ENCODE measurements at regions of chr7 and their contacts with region 1.

Region 1: GRCh38 chr7:113159746-113160339 is 41.5 kb upstream of the SMIM30 start:
- DNase-seq: peak; percentile 49
- H3K4me3 ChIP-seq: no peak overlapping the region
- H3K27ac ChIP-seq: no peak overlapping the region
- H3K4me1 ChIP-seq: no peaks in the 10 kb centered on the region
- H3K27me3 ChIP-seq: peaks cover 5% of the 10 kb centered on the region
- CTCF ChIP-seq: peak; percentile 73

Region 2: DNA sequence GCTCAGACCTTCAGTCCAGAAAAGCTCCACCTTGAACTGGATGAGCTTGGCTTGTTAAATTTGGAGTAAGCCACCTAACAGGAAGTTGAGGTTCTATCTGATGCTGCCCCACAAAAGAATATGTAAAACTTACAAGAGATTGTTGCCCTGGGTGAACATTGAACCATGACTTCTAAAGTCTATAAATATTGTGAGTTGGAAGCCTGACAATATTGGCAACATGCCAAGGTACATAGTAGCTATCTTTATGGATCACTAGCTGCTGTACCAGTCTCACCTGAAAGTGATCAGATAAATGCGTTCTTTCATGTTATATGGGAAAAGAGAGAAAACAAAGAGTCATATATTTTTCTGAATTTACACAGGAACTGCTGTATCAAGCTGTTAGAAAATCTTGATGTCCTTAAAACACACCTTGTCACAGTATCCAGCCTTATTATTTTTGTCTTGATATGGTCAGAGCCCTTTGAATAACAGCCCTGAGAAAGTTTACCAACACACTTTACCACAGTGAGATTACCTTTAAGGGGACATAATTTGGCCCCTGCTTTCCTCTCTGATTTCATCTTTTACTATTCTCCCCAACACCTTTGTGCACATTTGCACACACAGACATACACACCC is 587.1 kb before region 1 on chr7:
- CTCF ChIA-PET with region 1: no interaction called
- POLR2A ChIA-PET with region 1: no interaction called
- intact Hi-C with region 1: no loop called
- DNase-seq: no peak
- H3K4me3 ChIP-seq: no peak overlapping the region
- H3K27ac ChIP-seq: no peak overlapping the region
- H3K4me1 ChIP-seq: peaks cover 8% of the 10 kb centered on the region
- H3K27me3 ChIP-seq: no peaks in the 10 kb centered on the region
- CTCF ChIP-seq: no peak

Region 3: DNA sequence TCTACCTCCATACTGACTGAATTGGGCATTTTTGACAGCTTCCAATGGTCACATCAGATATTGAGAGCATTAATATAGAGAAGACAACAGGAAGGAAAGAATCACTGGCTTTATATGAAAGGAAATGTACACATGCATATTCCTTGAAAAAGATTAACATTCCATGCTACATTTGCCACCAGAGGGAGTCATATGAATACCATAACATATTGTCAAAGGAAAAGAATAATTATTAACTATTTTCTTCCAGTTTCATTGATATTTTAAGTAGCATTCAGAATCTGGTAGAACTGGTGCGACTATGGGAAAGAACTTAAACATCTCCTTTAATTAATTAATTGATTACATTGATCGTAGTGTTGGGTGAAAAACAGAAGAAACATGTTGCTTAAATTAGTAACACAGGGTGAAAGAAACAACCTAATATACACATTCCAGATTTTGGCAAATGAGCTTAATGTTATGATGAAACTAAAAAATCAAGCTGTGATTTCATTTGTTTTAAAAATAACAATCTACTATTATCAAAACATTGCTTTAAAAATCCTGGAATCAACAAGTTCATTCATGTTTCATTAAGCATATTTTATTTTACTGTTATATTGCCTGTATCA is 144.7 kb before region 1 on chr7:
- CTCF ChIA-PET with region 1: no interaction called
- POLR2A ChIA-PET with region 1: no interaction called
- intact Hi-C with region 1: loop called (anchors 10 kb)
- DNase-seq: peak; percentile 15
- H3K4me3 ChIP-seq: no peak overlapping the region
- H3K27ac ChIP-seq: no peak overlapping the region
- H3K4me1 ChIP-seq: no peaks in the 10 kb centered on the region
- H3K27me3 ChIP-seq: no peaks in the 10 kb centered on the region
- CTCF ChIP-seq: peak; percentile 59

Region 4: GRCh38 chr7:113289140-113289740 is 129.4 kb after region 1 on chr7:
- CTCF ChIA-PET with region 1: interaction called, 3 read pairs
- POLR2A ChIA-PET with region 1: no interaction called
- intact Hi-C with region 1: loop called (anchors 2 kb)
- DNase-seq: peak; percentile 23
- H3K4me3 ChIP-seq: no peak overlapping the region
- H3K27ac ChIP-seq: no peak overlapping the region
- H3K4me1 ChIP-seq: no peaks in the 10 kb centered on the region
- H3K27me3 ChIP-seq: no peaks in the 10 kb centered on the region
- CTCF ChIP-seq: peak; percentile 48